ENCODE measurements at regions of chr7 and their contacts with region 1.

Region 1: GRCh38 chr7:150473902-150474301 is 23.5 kb downstream of the GIMAP8 start:
- DNase-seq: no peak
- ATAC-seq: no peak
- H3K4me3 ChIP-seq: no peak overlapping the region
- H3K4me3 Mint-ChIP-seq: no peak overlapping the region
- H3K27ac ChIP-seq: no peak overlapping the region
- H3K27ac Mint-ChIP-seq: no peak overlapping the region
- H3K4me1 ChIP-seq: no peaks in the 10 kb centered on the region
- H3K4me1 Mint-ChIP-seq: no peaks in the 10 kb centered on the region
- H3K27me3 ChIP-seq: peaks cover 0 to 2% (median 1%) of the 10 kb centered on the region in 4 experiments
- H3K27me3 Mint-ChIP-seq: peaks cover 12% of the 10 kb centered on the region
- CTCF ChIP-seq: no peak

Region 2: GRCh38 chr7:150307904-150308303 is 166.0 kb before region 1 on chr7:
- CTCF ChIA-PET with region 1: no interaction called
- POLR2A ChIA-PET with region 1: no interaction called
- intact Hi-C with region 1: no loop called
- DNase-seq: no peak
- ATAC-seq: no peak
- H3K4me3 ChIP-seq: no peak overlapping the region
- H3K4me3 Mint-ChIP-seq: no peak overlapping the region
- H3K27ac ChIP-seq: no peak overlapping the region
- H3K27ac Mint-ChIP-seq: no peak overlapping the region
- H3K4me1 ChIP-seq: no peaks in the 10 kb centered on the region
- H3K4me1 Mint-ChIP-seq: no peaks in the 10 kb centered on the region
- H3K27me3 ChIP-seq: no peaks in the 10 kb centered on the region
- H3K27me3 Mint-ChIP-seq: no peaks in the 10 kb centered on the region
- CTCF ChIP-seq: no peak

Region 3: DNA sequence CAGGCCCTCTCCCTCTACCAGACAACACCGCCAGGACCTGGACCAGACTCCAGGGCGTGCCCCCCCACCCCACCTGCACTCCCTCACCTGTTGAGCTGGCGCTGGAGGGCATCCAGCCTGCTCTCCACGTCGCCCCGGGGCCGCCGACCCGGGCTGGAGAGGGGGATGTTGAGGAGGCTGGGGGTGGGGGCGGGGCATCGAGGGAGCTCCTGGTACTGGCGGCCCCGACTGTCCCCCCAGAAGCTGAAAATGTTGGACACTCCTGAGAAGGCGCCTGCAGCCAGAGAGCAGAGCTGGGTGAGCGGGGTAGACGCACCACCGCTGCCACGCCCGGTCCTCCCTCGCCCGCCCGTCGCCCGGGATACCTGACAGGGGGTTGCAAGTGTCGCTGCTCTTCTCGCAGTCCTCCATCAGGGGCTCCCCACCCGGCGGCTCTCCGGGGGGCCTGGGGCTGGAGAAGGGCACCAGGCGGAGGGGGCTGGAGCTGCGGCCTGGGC is 473.4 kb after region 1 on chr7:
- CTCF ChIA-PET with region 1: no interaction called
- POLR2A ChIA-PET with region 1: interaction called, 10 read pairs
- intact Hi-C with region 1: no loop called
- DNase-seq: no peak
- ATAC-seq: no peak
- H3K4me3 ChIP-seq: no peak overlapping the region
- H3K4me3 Mint-ChIP-seq: no peak overlapping the region
- H3K27ac ChIP-seq: no peak overlapping the region
- H3K27ac Mint-ChIP-seq: no peak overlapping the region
- H3K4me1 ChIP-seq: peaks cover 0 to 2% of the 10 kb centered on the region in 2 donors
- H3K4me1 Mint-ChIP-seq: no peaks in the 10 kb centered on the region
- H3K27me3 ChIP-seq: peaks cover 0 to 2% (median 0%) of the 10 kb centered on the region in 4 experiments
- H3K27me3 Mint-ChIP-seq: peaks cover 14% of the 10 kb centered on the region
- CTCF ChIP-seq: no peak

Region 4: GRCh38 chr7:151152643-151153513 is 679.0 kb after region 1 on chr7:
- CTCF ChIA-PET with region 1: no interaction called
- POLR2A ChIA-PET with region 1: no interaction called
- intact Hi-C with region 1: no loop called
- DNase-seq: no peak
- ATAC-seq: no peak
- H3K4me3 ChIP-seq: no peak overlapping the region
- H3K4me3 Mint-ChIP-seq: no peak overlapping the region
- H3K27ac ChIP-seq: no peak overlapping the region
- H3K27ac Mint-ChIP-seq: no peak overlapping the region
- H3K4me1 ChIP-seq: no peaks in the 10 kb centered on the region
- H3K4me1 Mint-ChIP-seq: no peaks in the 10 kb centered on the region
- H3K27me3 ChIP-seq: peaks cover 0 to 32% (median 10%) of the 10 kb centered on the region in 4 experiments
- H3K27me3 Mint-ChIP-seq: peaks cover 36% of the 10 kb centered on the region
- CTCF ChIP-seq: no peak